Esophagus muscularis mucosa (tissue), 4 donors: ENCODE measurements at regions of chr3 and their contacts with region 1.

Region 1: GRCh38 chr3:50170689-50171088 is 15.6 kb downstream of the SEMA3F start:
- DNase-seq: no peak
- H3K4me3 ChIP-seq: no peak overlapping the region
- H3K27ac ChIP-seq: peak overlapping the region in 3 of 4 donors; percentile 33 to 87 (median 85)
- H3K4me1 ChIP-seq: peaks cover 53 to 68% (median 64%) of the 10 kb centered on the region in 4 donors
- H3K27me3 ChIP-seq: no peaks in the 10 kb centered on the region
- CTCF ChIP-seq: no peak
- EP300 ChIP-seq: no peak
- POLR2A ChIP-seq: no peak

Region 2: GRCh38 chr3:50068134-50068533 is 102.6 kb before region 1 on chr3:
- intact Hi-C with region 1: no loop called
- DNase-seq: no peak
- H3K4me3 ChIP-seq: no peak overlapping the region
- H3K27ac ChIP-seq: no peak overlapping the region
- H3K4me1 ChIP-seq: no peaks in the 10 kb centered on the region
- H3K27me3 ChIP-seq: no peaks in the 10 kb centered on the region
- CTCF ChIP-seq: no peak
- EP300 ChIP-seq: no peak
- POLR2A ChIP-seq: no peak

Region 3: DNA sequence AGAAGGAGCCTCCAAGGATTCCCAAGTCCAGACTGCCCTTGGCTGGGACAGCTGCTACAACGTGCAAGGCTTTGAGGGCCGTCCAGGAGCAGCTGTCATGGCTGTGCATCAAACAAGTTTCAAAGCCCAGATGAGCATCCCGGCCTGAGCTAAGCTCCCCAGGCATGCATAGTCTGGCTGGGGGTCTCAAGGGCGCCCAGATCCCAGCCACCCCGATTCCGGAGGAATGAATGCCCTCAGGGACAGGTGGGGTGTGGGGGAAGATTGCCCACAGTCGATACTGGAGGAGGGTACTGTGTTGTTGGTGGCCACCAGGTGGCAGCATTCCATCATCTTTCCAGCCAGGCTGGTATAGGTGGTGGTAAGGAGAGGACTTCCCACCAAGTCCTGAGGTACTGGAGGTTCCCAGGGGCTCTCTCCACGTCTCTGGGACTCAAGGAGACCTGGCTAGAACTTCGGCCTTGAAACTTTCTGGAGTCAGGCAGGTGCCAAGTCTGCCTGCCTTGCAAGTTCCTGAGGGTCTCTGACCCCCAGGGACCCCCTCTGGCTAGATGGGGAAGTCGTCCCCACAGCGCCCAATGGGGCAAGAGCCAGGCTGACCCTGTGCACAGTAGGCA is 49.2 kb before region 1 on chr3:
- intact Hi-C with region 1: loop called (anchors 5 kb)
- DNase-seq: no peak
- H3K4me3 ChIP-seq: no peak overlapping the region
- H3K27ac ChIP-seq: no peak overlapping the region
- H3K4me1 ChIP-seq: peaks cover 27 to 40% (median 39%) of the 10 kb centered on the region in 4 donors
- H3K27me3 ChIP-seq: peaks cover 0 to 8% (median 0%) of the 10 kb centered on the region in 4 donors
- CTCF ChIP-seq: peak; percentile 84 to 85 (median 85)
- EP300 ChIP-seq: no peak
- POLR2A ChIP-seq: no peak